ENCODE measurements at regions of chr2 and their contacts with region 1.

Region 1: GRCh38 chr2:177772529-177772928 is 300.0 kb downstream of the PDE11A start:
- DNase-seq: peak in 5 of 9 donors; percentile 22 to 38 (median 25)
- ATAC-seq: no peak
- H3K4me3 ChIP-seq: no peak overlapping the region
- H3K4me3 Mint-ChIP-seq: no peak overlapping the region
- H3K27ac ChIP-seq: no peak overlapping the region
- H3K27ac Mint-ChIP-seq: no peak overlapping the region
- H3K4me1 ChIP-seq: no peaks in the 10 kb centered on the region
- H3K4me1 Mint-ChIP-seq: peaks cover 0 to 7% (median 4%) of the 10 kb centered on the region in 7 donors
- H3K27me3 ChIP-seq: peaks cover 0 to 2% of the 10 kb centered on the region in 2 donors
- H3K27me3 Mint-ChIP-seq: peaks cover 0 to 16% (median 0%) of the 10 kb centered on the region in 5 donors

Region 2: DNA sequence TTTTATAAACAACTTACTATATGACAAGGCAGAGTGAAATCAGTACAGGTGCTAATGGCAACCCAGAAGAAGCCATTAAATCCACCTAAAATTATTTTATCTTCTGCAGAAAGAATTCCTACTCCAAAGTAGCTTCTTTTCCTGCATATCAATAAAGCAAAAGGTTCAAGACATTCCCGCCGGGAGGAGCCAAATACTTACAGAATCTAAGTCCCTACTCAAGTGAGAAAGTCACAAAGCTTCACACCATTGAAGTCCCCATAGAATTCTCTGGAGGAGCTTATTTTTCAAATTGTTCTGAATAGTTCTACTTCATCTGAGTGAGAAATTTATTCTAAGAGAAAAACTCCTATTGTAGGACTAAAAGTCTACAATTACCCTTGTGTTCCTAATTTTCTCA is 793.6 kb before region 1 on chr2:
- CTCF ChIA-PET with region 1: no interaction called
- POLR2A ChIA-PET with region 1: no interaction called
- intact Hi-C with region 1: no loop called
- DNase-seq: no peak
- ATAC-seq: no peak
- H3K4me3 ChIP-seq: no peak overlapping the region
- H3K4me3 Mint-ChIP-seq: no peak overlapping the region
- H3K27ac ChIP-seq: no peak overlapping the region
- H3K27ac Mint-ChIP-seq: no peak overlapping the region
- H3K4me1 ChIP-seq: no peaks in the 10 kb centered on the region
- H3K4me1 Mint-ChIP-seq: no peaks in the 10 kb centered on the region
- H3K27me3 ChIP-seq: peaks cover 0 to 3% of the 10 kb centered on the region in 2 donors
- H3K27me3 Mint-ChIP-seq: peaks cover 2 to 33% (median 6%) of the 10 kb centered on the region in 5 donors

Region 3: DNA sequence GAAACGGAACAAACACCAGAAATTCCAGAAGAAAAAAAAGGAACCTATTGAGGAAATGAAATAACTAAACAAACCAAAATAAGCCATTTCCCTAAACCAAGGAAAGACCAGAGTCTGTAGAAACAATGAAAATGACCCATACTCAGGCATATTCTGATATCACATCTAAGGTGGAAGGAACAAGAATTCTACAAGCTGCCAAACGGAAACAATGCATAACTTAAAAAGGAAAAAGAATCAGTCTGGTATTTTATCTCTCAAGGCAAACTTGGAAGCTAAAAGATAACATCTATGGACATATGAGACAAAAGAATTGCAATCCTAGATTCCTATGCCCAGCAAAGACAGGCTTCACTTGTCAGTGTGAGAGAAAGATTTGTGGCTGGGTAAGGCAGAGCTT is 26.2 kb before region 1 on chr2:
- CTCF ChIA-PET with region 1: no interaction called
- POLR2A ChIA-PET with region 1: no interaction called
- intact Hi-C with region 1: no loop called
- DNase-seq: no peak
- ATAC-seq: no peak
- H3K4me3 ChIP-seq: no peak overlapping the region
- H3K4me3 Mint-ChIP-seq: no peak overlapping the region
- H3K27ac ChIP-seq: no peak overlapping the region
- H3K27ac Mint-ChIP-seq: peak overlapping the region in 1 of 9 donors; percentile 21
- H3K4me1 ChIP-seq: no peaks in the 10 kb centered on the region
- H3K4me1 Mint-ChIP-seq: no peaks in the 10 kb centered on the region
- H3K27me3 ChIP-seq: no peaks in the 10 kb centered on the region
- H3K27me3 Mint-ChIP-seq: peaks cover 0 to 26% (median 8%) of the 10 kb centered on the region in 5 donors

Region 4: GRCh38 chr2:177783835-177784744 is 11.6 kb after region 1 on chr2:
- CTCF ChIA-PET with region 1: interaction called, 5 read pairs
- POLR2A ChIA-PET with region 1: no interaction called
- intact Hi-C with region 1: loop called in 1 of 2 experiments (anchors 1 kb)
- DNase-seq: peak in 2 of 9 donors; percentile 14
- ATAC-seq: peak; percentile 83
- H3K4me3 ChIP-seq: peak overlapping the region; percentile 14
- H3K4me3 Mint-ChIP-seq: peak overlapping the region in 7 of 10 donors; percentile 34 to 80 (median 55)
- H3K27ac ChIP-seq: peak overlapping the region; percentile 29
- H3K27ac Mint-ChIP-seq: peak overlapping the region in 5 of 9 donors; percentile 26 to 89 (median 75)
- H3K4me1 ChIP-seq: peaks cover 21 to 26% of the 10 kb centered on the region in 2 donors
- H3K4me1 Mint-ChIP-seq: peaks cover 3 to 47% (median 29%) of the 10 kb centered on the region in 7 donors
- H3K27me3 ChIP-seq: no peaks in the 10 kb centered on the region
- H3K27me3 Mint-ChIP-seq: peaks cover 0 to 12% (median 0%) of the 10 kb centered on the region in 5 donors

Region 5: DNA sequence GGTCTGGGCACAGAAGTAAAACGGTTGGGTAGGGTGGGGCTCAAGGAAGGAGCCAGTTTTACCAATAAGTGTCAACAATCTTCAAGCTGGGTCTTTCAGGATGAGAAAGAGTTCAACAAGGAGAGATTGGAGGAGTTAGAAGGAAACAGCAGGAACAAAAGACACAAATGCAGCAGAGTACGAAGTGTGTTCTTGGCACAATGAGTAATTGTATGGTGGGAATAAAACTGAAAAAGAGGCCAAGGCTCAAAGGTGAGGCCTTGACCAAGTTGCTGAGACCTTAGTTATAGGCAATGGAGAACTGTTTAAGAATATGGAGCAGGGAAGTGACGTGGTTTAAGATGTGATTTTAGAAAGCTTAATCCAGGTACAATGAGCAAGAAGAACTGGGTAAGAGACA is 69.7 kb after region 1 on chr2:
- CTCF ChIA-PET with region 1: no interaction called
- POLR2A ChIA-PET with region 1: no interaction called
- intact Hi-C with region 1: loop called in 1 of 2 experiments (anchors 5 kb)
- DNase-seq: no peak
- ATAC-seq: no peak
- H3K4me3 ChIP-seq: no peak overlapping the region
- H3K4me3 Mint-ChIP-seq: no peak overlapping the region
- H3K27ac ChIP-seq: no peak overlapping the region
- H3K27ac Mint-ChIP-seq: no peak overlapping the region
- H3K4me1 ChIP-seq: no peaks in the 10 kb centered on the region
- H3K4me1 Mint-ChIP-seq: no peaks in the 10 kb centered on the region
- H3K27me3 ChIP-seq: no peaks in the 10 kb centered on the region
- H3K27me3 Mint-ChIP-seq: peaks cover 2 to 18% (median 7%) of the 10 kb centered on the region in 5 donors

Region 6: DNA sequence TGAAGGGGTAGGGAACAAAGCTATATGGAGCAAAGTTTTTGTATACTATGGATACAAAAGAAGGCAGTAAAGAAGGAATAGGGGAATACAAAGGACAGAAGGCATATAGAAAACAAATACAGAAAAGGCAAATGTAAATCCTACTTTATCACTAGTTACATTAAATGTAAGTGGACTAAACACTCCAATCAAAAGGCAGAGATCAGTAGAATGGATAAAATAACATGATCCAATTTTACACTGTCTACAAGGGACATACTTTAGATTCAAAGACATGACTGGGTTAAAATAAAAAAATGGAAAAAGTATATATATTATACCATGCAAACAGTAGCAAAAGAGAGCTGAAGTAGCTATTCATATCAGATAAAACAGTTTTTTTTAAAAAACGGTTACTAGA is 85.0 kb after region 1 on chr2:
- CTCF ChIA-PET with region 1: no interaction called
- POLR2A ChIA-PET with region 1: no interaction called
- intact Hi-C with region 1: loop called in 1 of 2 experiments (anchors 5 kb)
- DNase-seq: no peak
- ATAC-seq: no peak
- H3K4me3 ChIP-seq: no peak overlapping the region
- H3K4me3 Mint-ChIP-seq: no peak overlapping the region
- H3K27ac ChIP-seq: no peak overlapping the region
- H3K27ac Mint-ChIP-seq: no peak overlapping the region
- H3K4me1 ChIP-seq: no peaks in the 10 kb centered on the region
- H3K4me1 Mint-ChIP-seq: no peaks in the 10 kb centered on the region
- H3K27me3 ChIP-seq: peaks cover 0 to 4% of the 10 kb centered on the region in 2 donors
- H3K27me3 Mint-ChIP-seq: peaks cover 10 to 36% (median 31%) of the 10 kb centered on the region in 5 donors

Region 7: GRCh38 chr2:177906041-177906718 is 133.7 kb after region 1 on chr2:
- CTCF ChIA-PET with region 1: no interaction called
- POLR2A ChIA-PET with region 1: no interaction called
- intact Hi-C with region 1: loop called (anchors 2 to 5 kb)
- DNase-seq: peak; percentile 13 to 63 (median 35)
- ATAC-seq: peak; percentile 91
- H3K4me3 ChIP-seq: no peak overlapping the region
- H3K4me3 Mint-ChIP-seq: peak overlapping the region in 1 of 10 donors; percentile 32
- H3K27ac ChIP-seq: no peak overlapping the region
- H3K27ac Mint-ChIP-seq: no peak overlapping the region
- H3K4me1 ChIP-seq: no peaks in the 10 kb centered on the region
- H3K4me1 Mint-ChIP-seq: peaks cover 0 to 12% (median 0%) of the 10 kb centered on the region in 7 donors
- H3K27me3 ChIP-seq: no peaks in the 10 kb centered on the region
- H3K27me3 Mint-ChIP-seq: peaks cover 0 to 6% (median 0%) of the 10 kb centered on the region in 5 donors

Region 8: DNA sequence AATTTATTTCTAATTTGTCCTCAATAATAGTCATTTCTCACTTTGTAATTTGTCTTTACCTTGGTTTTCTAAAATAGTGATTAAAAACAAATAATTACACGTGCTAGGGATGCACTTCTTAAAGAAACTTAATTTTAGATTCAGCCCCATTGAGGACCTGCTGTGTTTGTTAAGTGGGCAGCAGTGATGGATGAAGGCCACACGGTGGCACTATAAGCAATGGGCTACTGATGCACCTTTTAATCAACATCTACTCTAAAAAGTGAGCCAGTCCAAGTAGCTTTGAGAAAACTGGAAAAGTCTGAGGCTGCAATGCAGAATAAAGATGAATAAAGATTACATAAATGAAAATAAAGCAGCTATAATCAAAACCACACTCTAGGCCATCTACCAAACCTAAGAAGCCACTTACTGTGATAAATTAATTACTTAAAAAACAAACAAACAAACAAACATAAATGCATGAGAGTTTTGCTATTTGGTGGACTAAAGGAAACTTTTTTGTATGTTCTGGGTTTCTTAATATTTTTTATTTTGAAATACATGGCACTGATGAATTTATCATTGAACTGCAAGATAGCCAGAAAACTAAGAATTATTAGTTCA is 210.8 kb after region 1 on chr2:
- CTCF ChIA-PET with region 1: no interaction called
- POLR2A ChIA-PET with region 1: no interaction called
- intact Hi-C with region 1: loop called in 1 of 2 experiments (anchors 5 kb)
- DNase-seq: peak in 1 of 9 donors; percentile 1
- ATAC-seq: no peak
- H3K4me3 ChIP-seq: no peak overlapping the region
- H3K4me3 Mint-ChIP-seq: no peak overlapping the region
- H3K27ac ChIP-seq: no peak overlapping the region
- H3K27ac Mint-ChIP-seq: no peak overlapping the region
- H3K4me1 ChIP-seq: no peaks in the 10 kb centered on the region
- H3K4me1 Mint-ChIP-seq: no peaks in the 10 kb centered on the region
- H3K27me3 ChIP-seq: no peaks in the 10 kb centered on the region
- H3K27me3 Mint-ChIP-seq: peaks cover 0 to 22% (median 4%) of the 10 kb centered on the region in 5 donors

Region 9: GRCh38 chr2:178747767-178748166 is 975.2 kb after region 1 on chr2:
- CTCF ChIA-PET with region 1: no interaction called
- POLR2A ChIA-PET with region 1: no interaction called
- intact Hi-C with region 1: no loop called
- DNase-seq: no peak
- ATAC-seq: no peak
- H3K4me3 ChIP-seq: no peak overlapping the region
- H3K4me3 Mint-ChIP-seq: no peak overlapping the region
- H3K27ac ChIP-seq: no peak overlapping the region
- H3K27ac Mint-ChIP-seq: no peak overlapping the region
- H3K4me1 ChIP-seq: no peaks in the 10 kb centered on the region
- H3K4me1 Mint-ChIP-seq: peaks cover 0 to 10% (median 0%) of the 10 kb centered on the region in 7 donors
- H3K27me3 ChIP-seq: no peaks in the 10 kb centered on the region
- H3K27me3 Mint-ChIP-seq: no peaks in the 10 kb centered on the region